ENCODE measurements at regions of chr3 and their contacts with region 1.

Region 1: GRCh38 chr3:105791919-105792786 is 76.7 kb downstream of the CBLB start:
- DNase-seq: no peak

Region 2: DNA sequence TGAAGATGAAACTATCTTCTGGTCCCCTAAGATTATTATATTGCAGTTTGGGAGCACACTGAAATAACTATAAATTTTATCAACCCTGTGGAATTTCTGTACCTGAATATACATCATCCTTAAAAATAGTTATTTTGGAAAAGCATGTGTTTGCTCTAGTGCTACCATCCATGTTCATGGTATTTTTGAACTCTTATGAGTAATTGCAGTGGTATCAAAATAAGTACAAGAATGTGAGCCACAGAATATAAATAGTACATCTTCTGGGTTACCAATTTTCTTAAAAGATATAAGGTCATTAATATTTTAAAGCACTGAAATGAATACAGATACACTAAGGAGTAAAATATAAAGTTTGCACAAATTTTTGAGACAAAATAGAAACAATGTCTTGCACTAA is 129.8 kb before region 1 on chr3:
- intact Hi-C with region 1: no loop called
- DNase-seq: no peak

Region 3: GRCh38 chr3:105747060-105747541 is 45.1 kb before region 1 on chr3:
- intact Hi-C with region 1: loop called (anchors 5 kb)
- DNase-seq: no peak

Region 4: DNA sequence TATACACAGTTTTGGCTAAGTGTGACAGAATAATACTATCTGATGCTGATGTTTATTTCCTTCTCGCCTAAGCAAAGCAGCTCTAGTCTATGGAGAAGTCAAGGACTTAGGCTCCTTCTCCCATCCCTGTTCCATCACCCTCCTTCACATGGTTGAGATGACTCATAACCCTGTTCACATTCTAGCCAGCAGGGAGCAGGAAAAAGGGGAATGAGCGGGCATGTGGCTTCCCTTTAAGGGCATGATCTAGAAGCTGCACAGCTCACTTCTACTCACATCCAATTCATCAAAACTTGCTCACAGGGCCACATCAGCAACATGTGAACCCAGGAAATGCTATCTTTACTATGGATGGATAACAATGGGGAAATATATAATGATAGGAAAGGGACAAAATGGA is 35.8 kb after region 1 on chr3:
- intact Hi-C with region 1: loop called (anchors 5 kb)
- DNase-seq: no peak

Region 5: DNA sequence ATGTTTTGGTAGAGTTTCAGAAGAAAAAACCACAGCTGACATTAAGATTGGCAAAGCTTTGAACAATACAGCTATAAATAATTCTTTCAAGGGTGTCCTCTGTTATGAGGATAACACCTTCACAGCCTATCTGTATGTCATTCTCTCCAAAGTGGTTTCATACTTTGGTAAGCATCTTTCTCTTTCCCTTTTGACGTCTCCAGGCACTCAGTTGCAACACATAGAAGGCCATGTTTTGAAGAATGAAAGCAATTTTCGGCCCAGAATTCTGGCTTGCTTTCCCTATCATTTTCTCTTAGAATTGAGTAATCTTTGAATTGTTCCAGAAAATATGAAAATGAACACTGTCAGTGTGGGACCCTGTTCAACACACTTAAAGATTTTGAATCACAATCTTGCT is 276.6 kb after region 1 on chr3:
- intact Hi-C with region 1: loop called (anchors 5 kb)
- DNase-seq: no peak